Mammary epithelial cell (primary cell): ENCODE measurements at regions of chr7 and their contacts with region 1.

Region 1: DNA sequence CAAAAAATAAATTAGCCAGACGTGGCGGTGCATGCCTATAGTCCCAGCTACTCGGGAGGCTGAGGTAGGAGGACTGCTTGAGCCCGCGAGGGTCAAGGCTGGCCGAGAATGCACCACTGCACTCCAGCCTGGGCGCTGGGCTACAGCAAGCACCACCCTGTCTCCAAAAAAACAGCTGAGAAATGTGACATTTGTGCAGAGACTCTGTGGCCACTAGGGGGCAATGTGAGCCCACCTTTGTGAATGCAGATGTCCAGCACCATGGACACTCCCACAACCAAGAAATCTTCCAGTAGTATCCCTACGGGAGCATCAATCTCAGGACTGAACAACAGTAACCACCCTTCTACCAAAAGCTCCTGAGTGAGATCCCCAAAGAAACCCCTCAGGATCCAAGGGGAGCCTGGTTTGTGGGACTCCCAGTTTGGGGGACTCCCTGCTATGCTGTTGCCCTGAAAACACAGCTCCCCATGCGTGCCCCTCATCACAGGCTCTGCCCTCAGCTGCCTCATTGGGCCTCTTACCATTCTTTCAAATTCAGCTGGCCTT is 6.2 kb upstream of the AHCYL2 start:
- DNase-seq: peak; percentile 72
- H3K4me3 ChIP-seq: no peak overlapping the region
- H3K27ac ChIP-seq: no peak overlapping the region
- H3K4me1 ChIP-seq: no peaks in the 10 kb centered on the region
- H3K27me3 ChIP-seq: no peaks in the 10 kb centered on the region
- CTCF ChIP-seq: peak; percentile 88 to 89

Region 2: GRCh38 chr7:129041142-129042085 is 177.2 kb before region 1 on chr7:
- CTCF ChIA-PET with region 1: no interaction called
- dilution Hi-C with region 1: no loop called
- in situ Hi-C with region 1: no loop called
- intact Hi-C with region 1: no loop called
- DNase-seq: no peak
- H3K4me3 ChIP-seq: no peak overlapping the region
- H3K27ac ChIP-seq: no peak overlapping the region
- H3K4me1 ChIP-seq: no peaks in the 10 kb centered on the region
- H3K27me3 ChIP-seq: no peaks in the 10 kb centered on the region
- CTCF ChIP-seq: no peak

Region 3: DNA sequence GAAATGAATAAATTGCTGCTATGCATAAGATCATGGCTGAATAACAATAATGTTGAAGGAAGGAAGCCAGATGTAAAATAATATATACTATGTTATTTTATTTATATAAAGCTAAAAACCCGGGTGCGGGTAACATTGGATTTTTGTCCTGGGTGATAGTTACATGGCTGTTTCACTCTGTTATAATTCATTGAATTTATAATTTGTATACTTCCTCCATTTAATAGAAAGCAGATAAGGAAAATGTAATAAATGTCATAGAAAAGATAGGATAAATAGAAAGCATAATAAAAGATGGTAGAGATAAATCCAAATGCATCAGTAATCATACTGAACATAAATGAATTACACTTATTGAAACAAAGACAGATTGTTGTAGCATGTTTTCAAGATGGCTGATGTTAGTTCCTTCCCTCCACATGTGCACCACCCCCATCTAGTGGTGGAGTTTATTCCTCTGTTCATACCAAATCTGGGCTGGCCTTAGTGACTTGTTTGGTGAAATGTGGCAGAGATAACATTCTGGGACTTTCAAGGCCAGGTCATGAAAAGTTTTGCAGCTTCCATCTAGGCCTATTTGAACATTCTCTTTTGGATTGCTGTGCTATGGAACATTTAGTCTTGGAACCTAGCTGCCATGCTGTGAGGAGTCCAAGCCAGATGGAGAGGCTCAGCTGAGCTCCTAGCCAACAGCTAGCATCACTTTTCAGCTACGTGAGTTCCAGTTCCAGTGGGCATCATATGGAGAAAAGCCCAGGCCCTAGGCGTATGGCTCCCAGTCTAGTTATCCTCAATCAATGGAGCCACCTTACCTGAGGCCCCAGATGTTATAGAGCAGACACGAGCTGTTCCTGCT is 53.1 kb after region 1 on chr7:
- CTCF ChIA-PET with region 1: interaction called, 7 read pairs
- dilution Hi-C with region 1: loop called (anchors 5 kb)
- in situ Hi-C with region 1: loop called in 1 of 2 experiments (anchors 10 kb)
- intact Hi-C with region 1: loop called (anchors 1 kb)
- DNase-seq: peak; percentile 54
- H3K4me3 ChIP-seq: no peak overlapping the region
- H3K27ac ChIP-seq: no peak overlapping the region
- H3K4me1 ChIP-seq: no peaks in the 10 kb centered on the region
- H3K27me3 ChIP-seq: no peaks in the 10 kb centered on the region
- CTCF ChIP-seq: peak; percentile 78 to 86

Region 4: DNA sequence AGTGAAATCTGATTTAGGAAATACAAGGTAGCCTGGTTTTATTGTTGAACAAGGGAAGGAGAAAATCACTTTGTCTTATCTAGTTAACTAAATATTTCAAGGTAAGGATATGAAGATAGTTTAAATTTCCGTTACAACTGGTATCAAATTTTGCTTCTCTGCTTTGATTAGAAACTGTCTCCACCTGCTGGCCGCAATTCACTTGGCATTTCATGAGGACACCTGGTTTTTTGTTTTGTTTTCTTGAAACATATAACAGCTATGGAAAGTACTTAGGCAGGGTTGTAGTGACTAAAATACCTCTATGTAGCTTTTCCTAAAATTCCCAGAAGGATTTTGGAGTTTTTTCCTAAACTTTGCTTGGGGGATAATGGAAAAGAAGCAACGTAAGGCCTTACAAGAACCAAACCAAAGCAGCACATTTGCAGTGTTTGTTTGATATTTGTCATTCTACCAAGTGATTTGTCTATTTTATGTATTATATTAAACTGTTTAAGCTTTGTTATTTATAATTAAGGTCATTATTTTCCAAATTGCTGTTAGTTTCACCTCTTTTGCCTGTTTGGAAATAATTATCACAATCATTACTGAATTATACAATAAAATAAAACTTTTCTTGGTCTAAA is 79.8 kb after region 1 on chr7:
- CTCF ChIA-PET with region 1: interaction called, 6 read pairs
- dilution Hi-C with region 1: loop called (anchors 5 kb)
- in situ Hi-C with region 1: loop called in 1 of 2 experiments (anchors 10 kb)
- intact Hi-C with region 1: loop called (anchors 1 kb)
- DNase-seq: peak; percentile 25
- H3K4me3 ChIP-seq: no peak overlapping the region
- H3K27ac ChIP-seq: no peak overlapping the region
- H3K4me1 ChIP-seq: peaks cover 6% of the 10 kb centered on the region
- H3K27me3 ChIP-seq: no peaks in the 10 kb centered on the region
- CTCF ChIP-seq: peak; percentile 77 to 80

Region 5: GRCh38 chr7:129343099-129343700 is 124.6 kb after region 1 on chr7:
- CTCF ChIA-PET with region 1: interaction called, 3 read pairs
- dilution Hi-C with region 1: no loop called
- in situ Hi-C with region 1: no loop called
- intact Hi-C with region 1: loop called (anchors 2 kb)
- DNase-seq: peak; percentile 36
- H3K4me3 ChIP-seq: no peak overlapping the region
- H3K27ac ChIP-seq: no peak overlapping the region
- H3K4me1 ChIP-seq: no peaks in the 10 kb centered on the region
- H3K27me3 ChIP-seq: no peaks in the 10 kb centered on the region
- CTCF ChIP-seq: peak; percentile 67 to 76

Region 6: GRCh38 chr7:129367700-129368388 is 149.3 kb after region 1 on chr7:
- CTCF ChIA-PET with region 1: interaction called, 7 read pairs
- dilution Hi-C with region 1: no loop called
- in situ Hi-C with region 1: no loop called
- intact Hi-C with region 1: loop called (anchors 1 kb)
- DNase-seq: peak; percentile 42
- H3K4me3 ChIP-seq: no peak overlapping the region
- H3K27ac ChIP-seq: no peak overlapping the region
- H3K4me1 ChIP-seq: no peaks in the 10 kb centered on the region
- H3K27me3 ChIP-seq: no peaks in the 10 kb centered on the region
- CTCF ChIP-seq: peak; percentile 82 to 89

Region 7: GRCh38 chr7:129635300-129636029 is 416.9 kb after region 1 on chr7:
- CTCF ChIA-PET with region 1: no interaction called
- dilution Hi-C with region 1: no loop called
- in situ Hi-C with region 1: no loop called
- intact Hi-C with region 1: loop called (anchors 1 kb)
- DNase-seq: peak; percentile 62
- H3K4me3 ChIP-seq: no peak overlapping the region
- H3K27ac ChIP-seq: no peak overlapping the region
- H3K4me1 ChIP-seq: no peaks in the 10 kb centered on the region
- H3K27me3 ChIP-seq: no peaks in the 10 kb centered on the region
- CTCF ChIP-seq: peak; percentile 82 to 93

Region 8: GRCh38 chr7:129644634-129645230 is 426.1 kb after region 1 on chr7:
- CTCF ChIA-PET with region 1: no interaction called
- dilution Hi-C with region 1: no loop called
- in situ Hi-C with region 1: no loop called
- intact Hi-C with region 1: loop called (anchors 1 kb)
- DNase-seq: peak; percentile 35
- H3K4me3 ChIP-seq: no peak overlapping the region
- H3K27ac ChIP-seq: no peak overlapping the region
- H3K4me1 ChIP-seq: peaks cover 2% of the 10 kb centered on the region
- H3K27me3 ChIP-seq: no peaks in the 10 kb centered on the region
- CTCF ChIP-seq: peak; percentile 35 to 54